ENCODE measurements at regions of chr1 and their contacts with region 1.

Region 1: GRCh38 chr1:39408641-39409054 is 82.8 kb upstream of the BMP8A start:
- DNase-seq: peak; percentile 87
- H3K4me3 ChIP-seq: peak overlapping the region; percentile 74
- H3K27me3 ChIP-seq: no peaks in the 10 kb centered on the region
- CTCF ChIP-seq: no peak

Region 2: DNA sequence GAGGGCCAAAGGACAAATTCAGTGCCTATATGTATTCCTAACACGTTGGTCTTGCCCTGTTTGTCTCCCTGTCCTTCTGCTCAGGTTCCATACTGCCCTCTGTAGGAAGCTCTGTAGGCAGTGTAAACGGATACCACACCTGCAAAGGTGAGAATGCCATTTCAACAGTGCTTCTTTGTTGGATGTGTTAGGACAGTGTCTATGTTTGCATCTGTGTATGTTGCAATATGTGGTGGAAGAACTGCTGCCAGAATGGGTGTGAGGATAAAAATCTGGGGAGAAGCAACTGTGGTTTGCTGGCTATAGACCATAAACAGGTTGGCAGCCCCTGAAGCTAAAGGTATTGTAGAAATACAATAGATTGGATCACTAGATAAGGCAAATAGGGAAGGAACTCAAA is 30.3 kb before region 1 on chr1:
- CTCF ChIA-PET with region 1: interaction called, 11 read pairs
- POLR2A ChIA-PET with region 1: no interaction called
- DNase-seq: no peak
- H3K4me3 ChIP-seq: no peak overlapping the region
- H3K27me3 ChIP-seq: no peaks in the 10 kb centered on the region
- CTCF ChIP-seq: peak; percentile 26; the same call in 1 of the 2 replicates

Region 3: DNA sequence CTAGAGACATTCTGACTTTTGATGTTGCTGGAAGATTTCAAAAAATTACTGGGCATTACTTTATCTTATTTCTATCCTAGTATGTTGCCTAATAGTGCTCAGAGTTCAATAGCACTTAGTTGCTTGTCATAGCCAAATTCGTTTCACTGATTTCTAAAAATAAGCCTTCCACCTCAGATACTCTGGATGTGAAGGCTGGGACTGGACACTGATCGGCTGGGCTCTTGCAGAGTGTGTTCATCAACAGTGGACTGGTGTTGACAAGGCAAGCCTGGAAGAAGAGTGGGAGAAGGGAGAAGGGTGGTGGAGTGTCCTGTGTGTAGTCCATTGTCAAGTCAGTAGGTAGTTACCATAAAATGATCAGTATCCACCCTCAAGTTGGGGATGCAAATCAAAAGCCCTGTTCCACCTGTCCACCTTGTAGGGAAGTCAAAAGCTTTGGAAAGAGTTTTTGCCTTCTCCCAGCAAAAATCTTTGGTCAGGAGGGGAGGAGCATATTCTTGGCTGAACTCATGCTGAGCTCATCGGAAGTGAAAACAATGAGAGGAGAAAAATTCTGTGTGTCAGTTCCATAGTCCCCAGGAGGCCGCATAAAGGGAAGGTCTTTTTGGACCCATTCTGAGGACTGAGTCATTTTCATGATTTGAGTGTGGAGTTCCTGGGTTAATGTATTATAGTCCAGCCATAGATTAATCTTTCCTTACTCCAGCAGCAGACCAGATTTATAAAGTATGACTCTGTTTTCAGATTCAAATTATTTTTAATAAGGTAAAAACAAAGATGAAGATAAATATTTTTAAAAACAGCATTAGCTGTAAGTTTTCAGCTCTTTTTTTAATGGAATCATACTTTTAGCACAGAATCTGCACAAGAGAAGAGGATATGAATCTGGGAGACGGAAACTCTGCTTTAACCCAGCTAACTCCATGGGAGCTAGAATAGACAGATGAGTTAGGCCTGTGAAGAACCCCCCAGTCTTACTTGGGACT is 16.7 kb before region 1 on chr1:
- CTCF ChIA-PET with region 1: interaction called, 39 read pairs
- POLR2A ChIA-PET with region 1: interaction called, 5 read pairs
- DNase-seq: no peak
- H3K4me3 ChIP-seq: no peak overlapping the region
- H3K27me3 ChIP-seq: no peaks in the 10 kb centered on the region
- CTCF ChIP-seq: no peak

Region 4: DNA sequence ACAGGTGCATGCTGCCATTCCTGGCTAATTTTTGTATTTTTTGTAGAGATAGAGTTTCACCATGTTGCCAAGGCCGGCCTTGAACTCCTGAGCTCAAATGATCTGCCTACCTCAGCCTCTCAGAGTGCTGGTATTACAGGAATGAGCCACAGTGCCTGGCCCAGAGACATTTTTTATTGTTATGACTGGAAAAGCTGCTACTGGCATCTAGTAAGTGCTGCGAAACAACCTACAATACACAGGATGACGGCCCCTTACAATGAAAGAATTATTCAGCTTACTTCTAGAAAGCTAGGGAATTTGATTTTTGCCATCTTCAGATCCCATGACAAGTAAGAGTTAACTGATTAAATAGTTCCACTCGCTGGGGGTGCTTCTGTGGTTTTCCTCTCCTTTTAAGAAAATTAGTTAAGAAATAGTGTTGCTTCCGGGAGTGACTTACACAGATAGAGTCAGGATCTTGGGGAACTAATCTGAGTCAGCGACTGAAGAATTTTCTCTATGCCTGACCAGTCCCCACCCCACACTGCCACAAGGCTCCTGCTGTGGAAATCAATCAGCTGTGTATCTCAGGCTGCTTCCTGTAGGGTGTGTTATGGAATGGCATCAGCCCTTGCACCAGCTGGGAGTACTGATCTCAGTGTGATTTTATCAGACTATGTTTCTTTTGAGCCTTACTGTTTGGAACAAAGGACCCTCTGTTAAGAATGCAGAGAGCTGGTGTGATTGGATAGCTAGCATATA is 10.2 kb before region 1 on chr1:
- CTCF ChIA-PET with region 1: interaction called, 12 read pairs
- POLR2A ChIA-PET with region 1: interaction called, 5 read pairs
- DNase-seq: peak; percentile 93
- H3K4me3 ChIP-seq: no peak overlapping the region
- H3K27me3 ChIP-seq: no peaks in the 10 kb centered on the region
- CTCF ChIP-seq: 0 out of 2 replicates have a peak, but pooled peaks have one; percentile 9

Region 5: DNA sequence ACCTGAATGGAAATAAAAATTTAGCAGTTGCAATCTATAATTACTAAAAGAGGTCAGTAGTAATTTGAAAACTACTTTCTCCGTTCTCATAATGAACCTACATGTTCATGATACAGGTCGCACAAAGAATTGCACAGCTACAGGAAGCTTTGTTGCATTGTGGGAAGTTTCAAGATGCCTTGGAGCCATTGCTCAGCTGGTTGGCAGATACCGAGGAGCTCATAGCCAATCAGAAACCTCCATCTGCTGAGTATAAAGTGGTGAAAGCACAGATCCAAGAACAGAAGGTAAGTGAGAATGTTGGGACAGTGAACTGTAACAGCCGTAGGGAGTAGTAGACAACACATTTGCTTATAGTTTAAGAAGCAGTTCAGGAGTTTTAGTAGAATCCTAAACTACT is 14.0 kb after region 1 on chr1:
- CTCF ChIA-PET with region 1: interaction called, 48 read pairs
- POLR2A ChIA-PET with region 1: no interaction called
- DNase-seq: no peak
- H3K4me3 ChIP-seq: no peak overlapping the region
- H3K27me3 ChIP-seq: no peaks in the 10 kb centered on the region
- CTCF ChIP-seq: no peak